ENCODE measurements at regions of chr1 and their contacts with region 1.

Region 1: GRCh38 chr1:27603681-27604578 is at the start of gene AHDC1:
- DNase-seq: peak; percentile 94
- ATAC-seq: peak; percentile 88
- H3K4me3 Mint-ChIP-seq: peak within 1 kb of the TSS; percentile 88
- H3K27ac Mint-ChIP-seq: peak within 1 kb of the TSS; percentile 82
- H3K4me1 Mint-ChIP-seq: peaks cover 45% of the 10 kb centered on the region
- H3K27me3 Mint-ChIP-seq: no peaks in the 10 kb centered on the region
- total RNA-seq, gene AHDC1: 20.9 to 22.7 TPM

Region 2: GRCh38 chr1:27402349-27402754 is 201.6 kb before region 1 on chr1:
- CTCF ChIA-PET with region 1: interaction called, 44 read pairs
- POLR2A ChIA-PET with region 1: interaction called, 4 read pairs
- DNase-seq: no peak
- ATAC-seq: no peak
- H3K4me3 Mint-ChIP-seq: no peak overlapping the region
- H3K27ac Mint-ChIP-seq: no peak overlapping the region
- H3K4me1 Mint-ChIP-seq: peaks cover 23% of the 10 kb centered on the region
- H3K27me3 Mint-ChIP-seq: no peaks in the 10 kb centered on the region

Region 3: GRCh38 chr1:27556781-27557595 is 46.9 kb before region 1 on chr1:
- CTCF ChIA-PET with region 1: interaction called, 150 read pairs
- POLR2A ChIA-PET with region 1: no interaction called
- DNase-seq: peak; percentile 84
- ATAC-seq: peak; percentile 74
- H3K4me3 Mint-ChIP-seq: peak overlapping the region; percentile 3
- H3K27ac Mint-ChIP-seq: peak overlapping the region; percentile 84
- H3K4me1 Mint-ChIP-seq: peaks cover 33% of the 10 kb centered on the region
- H3K27me3 Mint-ChIP-seq: no peaks in the 10 kb centered on the region

Region 4: GRCh38 chr1:27632387-27633297 is 28.7 kb after region 1 on chr1:
- CTCF ChIA-PET with region 1: interaction called, 19 read pairs
- POLR2A ChIA-PET with region 1: interaction called, 4 read pairs
- DNase-seq: peak; percentile 77
- ATAC-seq: peak; percentile 72
- H3K4me3 Mint-ChIP-seq: peak overlapping the region; percentile 55
- H3K27ac Mint-ChIP-seq: peak overlapping the region; percentile 75
- H3K4me1 Mint-ChIP-seq: peaks cover 76% of the 10 kb centered on the region
- H3K27me3 Mint-ChIP-seq: peaks cover 7% of the 10 kb centered on the region

Region 5: DNA sequence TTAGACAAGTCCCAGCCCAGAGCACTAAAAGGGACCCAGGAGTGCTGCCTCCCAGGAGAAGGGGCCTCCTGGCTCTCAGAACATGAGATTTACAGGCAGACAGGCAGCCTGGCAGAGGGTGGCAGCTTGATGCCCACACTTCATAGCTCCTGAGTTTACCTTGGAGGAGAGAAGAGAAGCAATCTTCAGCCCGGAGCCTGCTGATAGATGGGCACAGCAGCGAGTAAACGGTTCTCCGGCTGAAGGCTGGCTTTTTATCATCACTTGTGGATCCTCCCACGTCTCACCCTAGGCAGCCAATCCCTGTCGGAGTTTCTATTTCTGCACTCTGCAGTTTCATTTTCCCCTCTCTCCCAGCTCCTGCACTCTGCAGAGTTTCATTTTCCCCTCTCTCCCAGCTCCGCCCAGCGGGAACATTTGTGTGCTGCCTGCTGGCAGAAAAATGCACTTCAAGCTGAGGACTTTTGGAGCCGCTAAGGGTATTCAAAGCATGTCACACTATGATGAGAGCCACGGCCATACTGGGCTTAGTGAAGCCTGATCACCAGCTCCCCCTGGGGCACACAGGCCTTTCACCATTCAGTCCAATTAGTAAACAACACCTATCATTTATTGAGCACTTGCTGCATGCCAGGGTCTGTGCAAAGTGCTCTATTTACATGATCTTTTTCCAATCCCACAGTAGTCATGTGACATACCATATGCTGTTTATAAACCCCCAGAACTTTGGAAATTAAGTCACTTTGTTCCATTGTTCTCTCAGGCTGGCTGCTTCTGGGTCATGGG is 68.2 kb after region 1 on chr1 and contains the start of gene IFI6:
- CTCF ChIA-PET with region 1: interaction called, 320 read pairs
- POLR2A ChIA-PET with region 1: no interaction called
- DNase-seq: peak; percentile 89
- ATAC-seq: peak; percentile 95
- H3K4me3 Mint-ChIP-seq: peak within 1 kb of the TSS; percentile 97
- H3K27ac Mint-ChIP-seq: peak within 1 kb of the TSS; percentile 96
- H3K4me1 Mint-ChIP-seq: peaks cover 45% of the 10 kb centered on the region
- H3K27me3 Mint-ChIP-seq: no peaks in the 10 kb centered on the region
- total RNA-seq, gene IFI6: 271 to 272 TPM